HEK293 (cell line): ENCODE measurements at regions of chr17 and their contacts with region 1.

Region 1: GRCh38 chr17:78708510-78708973 is 73.5 kb downstream of the CYTH1 start:
- H3K4me3 ChIP-seq: no peak overlapping the region
- H3K27ac ChIP-seq: no peak overlapping the region
- H3K4me1 ChIP-seq: peaks cover 16% of the 10 kb centered on the region
- CTCF ChIP-seq: peak; percentile 80

Region 2: GRCh38 chr17:78313735-78314648 is 394.6 kb before region 1 on chr17:
- CTCF ChIA-PET with region 1: no interaction called
- POLR2A ChIA-PET with region 1: no interaction called
- H3K4me3 ChIP-seq: peak overlapping the region; percentile 36
- H3K27ac ChIP-seq: peak overlapping the region; percentile 80
- H3K4me1 ChIP-seq: peaks cover 28% of the 10 kb centered on the region
- CTCF ChIP-seq: no peak

Region 3: DNA sequence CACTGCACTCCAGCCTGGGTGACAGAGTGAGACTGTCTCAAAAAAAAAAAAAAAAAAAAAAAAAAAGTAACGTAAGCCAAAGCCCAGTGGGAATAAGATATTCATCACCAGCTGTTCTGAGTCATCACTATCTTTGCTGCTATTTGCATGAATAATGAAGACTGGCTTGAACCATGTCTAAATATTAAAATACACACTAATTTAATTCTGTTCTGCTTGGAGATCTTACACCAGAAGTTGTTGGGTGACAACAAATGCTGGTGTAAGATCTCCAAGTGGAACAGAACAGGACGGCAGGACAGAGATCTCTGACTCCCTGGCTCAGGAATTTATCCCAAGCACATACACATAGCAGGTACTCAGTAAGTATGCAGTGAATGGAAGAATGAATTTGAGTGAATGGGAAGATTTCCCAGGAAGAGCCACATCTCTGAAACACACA is 150.9 kb before region 1 on chr17:
- CTCF ChIA-PET with region 1: interaction called, 10 read pairs
- POLR2A ChIA-PET with region 1: no interaction called
- H3K4me3 ChIP-seq: peak overlapping the region; percentile 19
- H3K27ac ChIP-seq: peak overlapping the region; percentile 57
- H3K4me1 ChIP-seq: no peaks in the 10 kb centered on the region; the same call in 1 of the 2 replicates
- CTCF ChIP-seq: no peak

Region 4: GRCh38 chr17:78665952-78666920 is 42.3 kb before region 1 on chr17:
- CTCF ChIA-PET with region 1: interaction called, 17 read pairs
- POLR2A ChIA-PET with region 1: interaction called, 3 read pairs
- H3K4me3 ChIP-seq: no peak overlapping the region
- H3K27ac ChIP-seq: 0 out of 2 replicates have a peak overlapping the region, but pooled peaks have one; percentile 11
- H3K4me1 ChIP-seq: peaks cover 16% of the 10 kb centered on the region
- CTCF ChIP-seq: no peak

Region 5: DNA sequence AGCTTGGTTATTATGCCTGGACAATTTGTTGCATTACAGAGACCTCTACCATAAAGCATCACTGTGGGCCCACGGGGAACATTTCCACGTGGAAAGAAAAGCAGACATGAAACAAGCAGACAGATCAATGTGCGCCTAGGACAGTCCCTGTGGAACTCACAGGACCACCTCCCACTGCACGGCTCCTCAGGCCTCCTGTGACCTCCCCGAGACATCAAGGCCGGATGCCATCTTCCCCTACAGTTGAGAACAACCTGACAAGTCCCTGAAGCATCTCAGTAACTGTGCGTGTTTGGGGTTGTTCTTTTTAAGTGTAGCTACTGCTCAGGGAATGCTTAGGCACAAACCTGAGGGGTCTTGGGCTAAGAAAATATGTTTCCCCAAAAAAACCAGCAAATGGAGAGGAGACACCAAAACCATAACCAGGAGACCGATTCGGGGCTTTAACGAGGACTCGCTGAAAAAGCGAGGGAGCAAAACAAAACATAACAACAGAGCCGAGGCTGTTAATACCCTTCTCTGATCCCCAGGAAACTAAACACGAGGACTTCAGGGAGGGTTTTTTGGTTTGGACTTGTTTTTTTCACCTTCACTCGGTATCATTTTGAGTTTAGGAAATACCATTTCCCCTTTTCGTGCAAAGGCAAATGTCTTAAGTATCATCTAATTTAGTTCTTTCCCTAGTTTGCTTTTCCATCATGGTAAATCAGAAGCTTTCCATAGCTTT is 13.6 kb before region 1 on chr17:
- CTCF ChIA-PET with region 1: interaction called, 13 read pairs
- POLR2A ChIA-PET with region 1: no interaction called
- H3K4me3 ChIP-seq: no peak overlapping the region
- H3K27ac ChIP-seq: no peak overlapping the region
- H3K4me1 ChIP-seq: no peaks in the 10 kb centered on the region
- CTCF ChIP-seq: no peak

Region 6: GRCh38 chr17:78741644-78742284 is 33.2 kb after region 1 on chr17:
- CTCF ChIA-PET with region 1: interaction called, 36 read pairs
- POLR2A ChIA-PET with region 1: interaction called, 9 read pairs
- H3K4me3 ChIP-seq: no peak overlapping the region
- H3K27ac ChIP-seq: no peak overlapping the region
- H3K4me1 ChIP-seq: peaks cover 13% of the 10 kb centered on the region
- CTCF ChIP-seq: no peak

Region 7: DNA sequence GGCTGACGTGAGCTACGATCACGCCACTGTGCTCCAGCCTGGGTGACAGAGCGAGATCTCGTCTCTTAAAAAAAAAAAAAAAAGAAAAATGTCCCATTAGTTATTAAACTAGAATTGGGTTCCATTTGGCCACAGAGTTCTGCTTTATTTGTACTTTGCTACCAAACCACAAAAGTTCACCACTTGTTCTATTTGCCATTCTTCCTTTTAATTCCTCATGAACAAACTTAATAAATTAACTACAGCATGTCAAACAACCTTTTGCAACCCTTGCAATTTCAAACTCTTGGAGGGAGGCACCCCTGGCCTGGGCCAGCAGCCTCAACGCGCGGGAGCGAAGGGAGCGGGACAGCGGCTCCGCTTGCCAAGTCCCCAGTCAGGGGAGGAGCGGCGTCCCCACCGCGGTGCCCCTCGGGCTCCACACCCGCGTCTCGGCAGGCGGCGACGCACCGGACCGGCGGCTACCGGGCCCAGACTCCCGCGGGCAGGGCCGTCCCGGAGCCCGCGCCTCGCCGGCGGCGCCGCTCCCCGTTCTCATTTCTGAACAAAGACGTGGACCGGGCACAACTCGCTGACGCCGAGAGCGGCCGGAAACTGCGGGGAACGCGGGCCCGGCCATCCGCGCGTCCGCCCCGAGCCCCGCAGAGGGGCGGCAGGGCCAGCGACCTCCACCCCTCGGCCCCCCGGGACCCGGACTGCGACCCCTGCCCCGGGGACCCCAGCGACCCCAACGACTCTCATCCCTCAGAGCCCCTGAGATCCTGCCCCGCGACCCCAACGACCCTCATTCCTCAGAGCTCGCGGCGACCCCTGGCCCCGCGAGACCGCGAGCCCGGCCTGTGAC is 72.8 kb after region 1 on chr17:
- CTCF ChIA-PET with region 1: no interaction called
- POLR2A ChIA-PET with region 1: no interaction called
- H3K4me3 ChIP-seq: peak overlapping the region; percentile 91
- H3K27ac ChIP-seq: peak overlapping the region; percentile 54; the same call in 1 of the 2 replicates
- H3K4me1 ChIP-seq: no peaks in the 10 kb centered on the region
- CTCF ChIP-seq: no peak